Panc1 (cell line): ENCODE measurements at regions of chr10 and their contacts with region 1.

Region 1: GRCh38 chr10:111933917-111934316 is 249.6 kb downstream of the GPAM start:
- DNase-seq: no peak
- ATAC-seq: no peak
- H3K4me3 ChIP-seq: no peak overlapping the region
- H3K27ac ChIP-seq: no peak overlapping the region
- H3K4me1 ChIP-seq: no peaks in the 10 kb centered on the region
- H3K27me3 ChIP-seq: no peaks in the 10 kb centered on the region
- CTCF ChIP-seq: no peak; the same call in 1 of the 2 replicates

Region 2: GRCh38 chr10:111954386-111954785 is 20.5 kb after region 1 on chr10:
- CTCF ChIA-PET with region 1: no interaction called
- POLR2A ChIA-PET with region 1: interaction called, 15 read pairs
- in situ Hi-C with region 1: no loop called
- intact Hi-C with region 1: no loop called
- DNase-seq: no peak
- ATAC-seq: no peak
- H3K4me3 ChIP-seq: no peak overlapping the region
- H3K27ac ChIP-seq: no peak overlapping the region
- H3K4me1 ChIP-seq: no peaks in the 10 kb centered on the region
- H3K27me3 ChIP-seq: no peaks in the 10 kb centered on the region
- CTCF ChIP-seq: no peak